ENCODE measurements at regions of chr10 and their contacts with region 1.

Region 1: GRCh38 chr10:109914966-109915365 is 8.3 kb downstream of the XPNPEP1 start:
- DNase-seq: peak; percentile 81
- H3K4me3 ChIP-seq: peak overlapping the region; percentile 40
- H3K27ac ChIP-seq: peak overlapping the region; percentile 98
- H3K4me1 ChIP-seq: peaks cover 88% of the 10 kb centered on the region
- CTCF ChIP-seq: no peak

Region 2: GRCh38 chr10:109456566-109457301 is 458.2 kb before region 1 on chr10:
- CTCF ChIA-PET with region 1: no interaction called
- POLR2A ChIA-PET with region 1: no interaction called
- intact Hi-C with region 1: no loop called
- DNase-seq: no peak
- H3K4me3 ChIP-seq: no peak overlapping the region
- H3K27ac ChIP-seq: no peak overlapping the region
- H3K4me1 ChIP-seq: no peaks in the 10 kb centered on the region
- CTCF ChIP-seq: no peak

Region 3: GRCh38 chr10:109883859-109884771 is 30.9 kb before region 1 on chr10:
- CTCF ChIA-PET with region 1: interaction called, 4 read pairs
- POLR2A ChIA-PET with region 1: interaction called, 5 read pairs
- intact Hi-C with region 1: loop called (anchors 2 kb)
- DNase-seq: peak; percentile 81
- H3K4me3 ChIP-seq: no peak overlapping the region
- H3K27ac ChIP-seq: no peak overlapping the region
- H3K4me1 ChIP-seq: peaks cover 23% of the 10 kb centered on the region
- CTCF ChIP-seq: peak; percentile 98

Region 4: GRCh38 chr10:109902934-109903589 is 11.9 kb before region 1 on chr10:
- CTCF ChIA-PET with region 1: interaction called, 4 read pairs
- POLR2A ChIA-PET with region 1: interaction called, 58 read pairs
- intact Hi-C with region 1: no loop called
- DNase-seq: no peak
- H3K4me3 ChIP-seq: no peak overlapping the region
- H3K27ac ChIP-seq: no peak overlapping the region
- H3K4me1 ChIP-seq: no peaks in the 10 kb centered on the region
- CTCF ChIP-seq: no peak

Region 5: DNA sequence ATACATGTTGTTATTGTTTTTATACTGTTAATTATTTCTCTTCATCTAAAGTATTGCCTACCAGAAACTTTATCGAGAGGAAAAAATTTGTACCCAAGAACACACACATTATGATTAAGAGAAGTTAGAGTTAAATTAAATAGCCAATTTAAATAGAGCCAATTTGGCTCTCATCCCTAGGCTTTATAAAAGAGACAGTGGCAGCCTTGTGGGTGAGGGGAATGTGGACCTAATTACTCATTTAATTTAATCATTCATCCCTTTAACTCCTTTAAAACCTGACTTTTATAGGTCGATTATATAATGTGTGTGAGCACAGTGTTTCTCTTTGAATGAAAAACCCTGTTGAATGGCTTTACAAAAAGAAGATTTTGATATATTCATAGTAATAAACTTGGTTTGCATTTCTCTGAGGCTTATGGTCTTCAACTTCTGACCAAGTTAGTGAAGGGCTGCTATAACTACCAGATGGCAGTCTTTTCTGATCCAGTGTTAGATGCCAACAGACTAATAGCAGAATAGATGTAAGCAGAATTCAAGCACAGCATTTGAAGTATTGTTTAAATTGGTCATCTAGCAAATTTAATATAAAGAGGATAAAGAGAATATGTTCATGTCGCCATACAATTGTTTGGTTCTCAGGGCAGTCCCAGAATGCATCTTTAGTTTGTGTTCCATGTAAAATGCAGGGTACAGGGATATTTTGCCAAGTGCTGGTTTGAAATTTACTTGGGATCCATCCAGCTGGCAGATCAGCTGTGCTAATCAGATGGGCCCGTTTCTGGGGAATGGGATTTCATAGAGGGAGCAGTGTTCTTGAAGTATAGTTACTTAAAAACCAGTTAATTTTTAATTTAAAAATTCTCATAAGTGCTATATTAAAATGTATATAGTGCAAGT is 118.1 kb after region 1 on chr10:
- CTCF ChIA-PET with region 1: no interaction called
- POLR2A ChIA-PET with region 1: no interaction called
- intact Hi-C with region 1: no loop called
- DNase-seq: no peak
- H3K4me3 ChIP-seq: no peak overlapping the region
- H3K27ac ChIP-seq: no peak overlapping the region
- H3K4me1 ChIP-seq: peaks cover 17% of the 10 kb centered on the region
- CTCF ChIP-seq: no peak

Region 6: DNA sequence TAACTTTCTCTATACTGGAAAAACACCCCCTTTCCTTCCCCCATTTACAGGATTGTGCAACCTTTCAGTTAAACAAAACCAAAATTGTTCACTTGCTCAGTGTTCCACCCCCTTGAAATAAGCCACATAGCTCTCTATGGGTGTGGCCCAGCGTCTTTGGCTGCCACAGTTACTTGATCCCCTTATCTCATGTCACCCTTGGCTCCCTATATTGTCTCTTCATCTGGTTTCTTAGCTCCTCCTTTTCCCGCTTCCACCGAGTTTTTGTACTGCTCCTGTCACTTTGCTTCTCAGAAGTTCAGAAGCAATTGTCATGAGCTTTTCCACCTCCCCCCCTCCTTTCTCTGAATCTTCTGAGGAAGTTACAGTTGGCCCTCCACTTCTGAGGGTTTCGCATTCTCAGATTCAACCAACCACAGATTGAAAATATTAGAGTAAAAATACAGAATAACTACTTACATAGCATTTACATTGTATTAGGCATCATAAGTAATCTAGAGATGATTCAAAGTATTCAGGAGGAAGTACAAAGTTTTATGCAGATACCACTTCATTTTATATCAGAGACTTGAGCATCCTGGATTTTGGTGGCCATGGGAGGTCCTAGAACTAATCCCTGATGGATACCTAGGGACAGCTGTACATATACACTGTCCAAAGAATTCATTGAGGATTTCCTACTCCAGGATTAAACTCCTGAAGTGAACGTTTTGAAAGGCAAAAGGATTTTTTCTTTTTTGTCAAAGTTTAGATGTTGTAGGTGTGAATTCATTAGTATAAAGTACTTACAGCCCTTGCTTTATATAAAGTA is 153.2 kb after region 1 on chr10:
- CTCF ChIA-PET with region 1: no interaction called
- POLR2A ChIA-PET with region 1: interaction called, 11 read pairs
- intact Hi-C with region 1: loop called (anchors 5 kb)
- DNase-seq: peak; percentile 28
- H3K4me3 ChIP-seq: no peak overlapping the region
- H3K27ac ChIP-seq: no peak overlapping the region
- H3K4me1 ChIP-seq: peaks cover 66% of the 10 kb centered on the region
- CTCF ChIP-seq: no peak

Region 7: GRCh38 chr10:110225756-110226542 is 311.0 kb after region 1 on chr10:
- CTCF ChIA-PET with region 1: interaction called, 13 read pairs
- POLR2A ChIA-PET with region 1: no interaction called
- intact Hi-C with region 1: loop called (anchors 5 kb)
- DNase-seq: peak; percentile 93
- H3K4me3 ChIP-seq: peak overlapping the region; percentile 79
- H3K27ac ChIP-seq: peak overlapping the region; percentile 72
- H3K4me1 ChIP-seq: peaks cover 22% of the 10 kb centered on the region
- CTCF ChIP-seq: peak; percentile 55; the same call in 1 of the 2 replicates

Region 8: GRCh38 chr10:110471566-110472139 is 556.7 kb after region 1 on chr10:
- CTCF ChIA-PET with region 1: no interaction called
- POLR2A ChIA-PET with region 1: no interaction called
- intact Hi-C with region 1: no loop called
- DNase-seq: no peak
- H3K4me3 ChIP-seq: no peak overlapping the region
- H3K27ac ChIP-seq: no peak overlapping the region
- H3K4me1 ChIP-seq: no peaks in the 10 kb centered on the region
- CTCF ChIP-seq: no peak

Measured in OCI-LY7 (cell line).